ENCODE measurements at regions of chr3 and their contacts with region 1.

Region 1: DNA sequence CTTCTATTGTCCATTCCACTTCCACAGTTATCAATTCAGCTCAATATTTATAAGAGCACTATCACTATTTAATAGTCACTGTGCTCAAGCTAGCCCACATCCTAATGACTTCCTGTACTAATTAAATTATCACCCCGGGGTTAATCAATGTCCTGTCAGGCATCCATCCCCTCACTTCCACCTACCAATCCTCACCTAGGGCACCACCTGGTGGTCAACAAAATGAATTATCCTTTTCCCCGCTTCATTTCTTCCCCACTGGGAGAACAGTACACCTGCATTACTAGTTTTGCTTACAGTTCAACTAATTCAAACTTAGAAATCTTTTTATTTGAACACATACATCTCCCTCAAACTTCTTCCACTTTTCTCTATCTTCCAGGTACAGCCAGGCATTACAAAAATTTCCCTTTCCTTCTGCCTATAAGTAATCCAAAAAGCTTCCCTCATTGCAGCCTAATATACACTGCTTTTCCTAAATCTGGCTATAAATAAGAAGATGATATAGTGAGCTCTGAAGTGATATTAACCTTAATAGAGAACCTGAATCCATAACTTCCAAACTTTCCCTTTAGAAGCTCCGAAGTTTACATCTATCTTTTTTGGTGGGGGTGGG is 68.5 kb downstream of the TMCC1 start:
- DNase-seq: no peak

Region 2: GRCh38 chr3:129383292-129383860 is 441.7 kb before region 1 on chr3:
- intact Hi-C with region 1: loop called (anchors 5 kb)
- DNase-seq: no peak

Region 3: DNA sequence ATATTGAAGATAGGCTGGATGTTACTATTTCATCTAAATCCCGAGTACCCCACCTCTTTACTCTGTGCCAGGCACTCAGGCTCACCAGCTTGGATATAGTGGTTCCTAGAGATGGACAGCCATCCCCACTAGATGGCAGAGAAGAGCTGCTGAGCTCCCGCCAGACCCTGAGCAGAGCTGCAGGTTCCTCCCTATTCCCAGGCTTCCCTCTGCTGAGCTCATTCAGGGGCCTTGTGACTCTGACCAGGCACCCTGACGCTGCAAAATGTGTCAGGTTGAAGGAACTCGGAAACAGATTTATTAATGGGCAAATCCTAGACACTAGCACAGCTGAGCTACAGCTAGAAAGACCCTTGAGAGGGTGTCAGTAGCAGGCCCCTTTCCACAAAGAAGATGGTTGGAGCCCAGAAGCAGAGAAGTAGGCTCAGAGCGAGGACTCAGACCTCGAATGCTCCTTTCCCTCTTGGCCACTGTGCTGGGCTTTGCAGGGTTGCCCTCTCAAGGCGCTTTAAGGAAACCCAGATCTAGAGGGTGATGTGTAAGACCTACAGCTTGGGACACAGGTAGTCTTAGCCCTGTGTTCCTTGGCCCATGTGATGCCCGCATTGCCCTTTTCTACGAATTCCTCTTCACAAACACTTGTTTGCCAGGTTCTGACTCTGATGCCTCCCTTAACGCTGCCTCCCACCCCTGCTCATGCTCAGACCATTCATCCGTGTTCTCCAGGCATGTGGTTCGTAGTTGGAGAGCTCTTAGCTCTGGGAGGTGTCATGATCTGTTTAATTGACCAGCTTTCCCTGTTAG is 334.6 kb before region 1 on chr3:
- intact Hi-C with region 1: loop called (anchors 2 kb)
- DNase-seq: peak; percentile 92

Region 4: GRCh38 chr3:129627429-129628168 is 197.4 kb before region 1 on chr3:
- intact Hi-C with region 1: loop called (anchors 2 kb)
- DNase-seq: no peak

Region 5: DNA sequence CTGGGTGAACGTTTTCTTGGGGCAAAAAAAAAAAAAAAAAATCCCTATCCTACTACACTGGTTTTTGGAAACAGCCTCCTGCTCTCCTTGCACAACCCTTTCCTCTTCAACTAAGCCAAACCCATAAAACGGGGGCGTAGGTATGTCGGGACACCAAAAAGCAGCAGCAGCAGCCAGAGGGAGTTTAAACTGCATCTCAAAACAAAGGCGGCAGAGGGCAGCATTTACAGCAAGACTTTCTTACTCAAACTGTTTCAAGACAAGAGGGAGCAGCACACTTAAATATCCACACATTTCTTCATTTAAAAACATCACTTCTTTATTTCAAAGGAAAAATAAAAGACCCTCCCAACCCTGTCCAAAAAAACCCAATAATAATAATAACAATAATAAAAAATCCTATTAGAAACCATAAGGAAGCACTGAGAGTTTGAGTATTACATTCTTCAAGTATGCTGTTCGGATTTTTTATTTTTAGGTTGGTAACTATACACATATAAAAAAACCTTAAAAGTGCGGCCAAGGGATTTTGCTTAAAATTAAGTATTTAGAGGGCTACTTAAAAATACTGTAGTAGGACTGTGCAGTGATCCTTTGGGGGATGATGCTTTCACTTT is 174.7 kb before region 1 on chr3:
- intact Hi-C with region 1: loop called (anchors 2 kb)
- DNase-seq: no peak

Region 6: GRCh38 chr3:129893581-129894070 is 68.6 kb after region 1 on chr3 and contains the start of gene TMCC1:
- intact Hi-C with region 1: loop called (anchors 5 kb)
- DNase-seq: peak; percentile 94
- total RNA-seq, gene TMCC1: 35.2 TPM

Region 7: DNA sequence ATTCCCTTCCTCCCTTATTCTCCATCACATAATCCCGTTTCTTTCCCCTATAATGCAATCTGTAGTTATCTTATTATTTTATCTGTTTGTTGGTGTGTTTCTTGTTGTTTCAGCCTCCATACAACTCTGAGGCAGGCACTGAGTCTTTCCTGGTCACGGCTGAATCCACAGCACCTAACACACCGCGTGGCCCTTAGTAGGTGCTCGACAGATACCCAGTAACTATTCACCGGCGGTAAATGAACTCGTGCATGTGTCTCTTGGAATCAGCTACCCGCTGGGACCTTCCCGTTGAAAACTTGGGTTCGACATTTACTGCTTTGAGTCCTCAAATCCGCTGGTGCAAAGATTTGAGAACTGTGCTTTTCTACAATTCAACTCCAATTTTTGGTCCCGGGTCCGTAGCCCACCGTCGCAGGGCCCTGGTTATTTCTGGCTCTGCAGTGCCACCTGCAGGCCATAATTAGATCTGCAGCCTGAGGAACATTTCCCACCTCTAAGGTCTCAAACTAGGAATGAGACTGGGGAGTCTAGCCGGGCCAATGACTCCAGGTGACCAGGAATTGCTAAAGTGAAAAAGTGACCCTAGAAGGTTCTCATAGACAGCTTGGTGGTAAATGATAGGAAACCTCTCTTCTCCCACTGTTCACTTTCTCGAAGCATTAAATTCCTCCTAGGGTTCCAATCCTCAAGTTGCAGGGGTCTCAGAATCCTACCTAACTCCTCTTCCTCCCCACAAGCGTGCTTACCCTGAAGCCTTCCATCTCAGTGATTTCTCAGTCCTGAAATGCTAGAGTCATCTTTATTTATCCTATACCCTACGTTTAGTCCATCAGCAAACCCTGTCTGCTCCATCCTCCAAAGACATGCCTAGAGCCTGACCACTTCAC is 109.4 kb after region 1 on chr3:
- intact Hi-C with region 1: loop called (anchors 5 kb)
- DNase-seq: no peak